ENCODE measurements at regions of chr11 and their contacts with region 1.

Region 1: GRCh38 chr11:18634140-18635032 is at the start of gene SPTY2D1:
- DNase-seq: peak; percentile 87
- ATAC-seq: peak; percentile 93
- H3K4me3 Mint-ChIP-seq: peak within 1 kb of the TSS; percentile 99
- H3K27ac Mint-ChIP-seq: peak within 1 kb of the TSS; percentile 97
- H3K4me1 Mint-ChIP-seq: peaks cover 25% of the 10 kb centered on the region
- H3K27me3 Mint-ChIP-seq: peaks cover 3% of the 10 kb centered on the region
- CTCF ChIP-seq: no peak
- total RNA-seq, gene SPTY2D1: 22.0 and 22.7 TPM in 2 replicates

Region 2: DNA sequence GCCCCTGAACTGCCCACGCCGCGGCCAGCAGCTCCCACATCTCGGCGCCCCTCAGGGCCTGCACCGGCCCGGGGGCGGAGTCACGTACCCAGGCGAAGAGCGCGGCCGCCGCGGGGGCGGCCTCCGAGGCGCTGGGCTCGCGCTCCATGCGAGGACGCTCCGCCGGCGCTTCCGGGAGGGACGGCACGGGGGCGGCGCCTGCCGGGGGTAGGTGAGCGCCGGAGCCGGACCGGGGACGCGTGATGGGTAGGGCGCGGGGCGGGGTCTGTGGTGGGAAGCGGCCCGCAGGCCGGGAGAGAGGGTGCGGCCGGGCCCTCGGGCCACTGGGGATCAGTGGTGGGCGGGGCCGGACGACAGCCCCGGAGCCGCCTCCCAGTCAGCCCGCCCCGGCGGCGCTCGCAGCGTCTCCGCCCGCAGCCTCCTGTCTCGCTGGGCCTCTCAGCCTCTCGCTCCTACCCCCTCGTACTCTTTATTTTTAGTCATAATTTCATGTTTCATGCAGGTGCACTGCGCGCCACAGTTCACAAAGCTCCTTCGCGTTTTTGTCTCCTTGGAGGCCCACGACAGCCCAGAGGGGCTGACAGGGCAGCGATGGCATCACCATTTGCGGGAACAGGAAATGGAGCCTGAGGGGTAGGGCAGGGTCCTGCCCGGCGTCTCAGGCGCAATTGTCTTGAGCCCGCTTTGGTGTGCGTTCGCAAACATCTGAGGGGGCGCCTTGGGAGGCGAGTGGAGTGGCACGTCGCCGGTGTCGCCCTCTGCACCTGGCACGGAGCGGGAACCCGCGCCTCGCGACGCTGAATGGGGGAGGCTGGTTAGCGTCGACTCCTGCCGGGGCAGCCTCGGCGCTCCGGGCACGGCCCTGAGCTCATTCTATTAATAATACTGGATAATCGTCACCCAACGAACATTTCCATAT is 621.3 kb before region 1 on chr11 and contains the start of gene SERGEF:
- CTCF ChIA-PET with region 1: no interaction called
- POLR2A ChIA-PET with region 1: no interaction called
- intact Hi-C with region 1: loop called (anchors 1 kb)
- DNase-seq: peak; percentile 96
- ATAC-seq: peak; percentile 94
- H3K4me3 Mint-ChIP-seq: peak within 1 kb of the TSS; percentile 100
- H3K27ac Mint-ChIP-seq: peak within 1 kb of the TSS; percentile 99
- H3K4me1 Mint-ChIP-seq: peaks cover 16% of the 10 kb centered on the region
- H3K27me3 Mint-ChIP-seq: no peaks in the 10 kb centered on the region
- CTCF ChIP-seq: no peak
- total RNA-seq, gene SERGEF: 38.4 and 47.4 TPM in 2 replicates

Region 3: GRCh38 chr11:18395735-18396504 is 238.5 kb before region 1 on chr11:
- CTCF ChIA-PET with region 1: no interaction called
- POLR2A ChIA-PET with region 1: interaction called, 12 read pairs
- intact Hi-C with region 1: loop called (anchors 2 kb)
- DNase-seq: peak; percentile 96
- ATAC-seq: peak; percentile 76
- H3K4me3 Mint-ChIP-seq: peak overlapping the region; percentile 96
- H3K27ac Mint-ChIP-seq: peak overlapping the region; percentile 91
- H3K4me1 Mint-ChIP-seq: peaks cover 18% of the 10 kb centered on the region
- H3K27me3 Mint-ChIP-seq: no peaks in the 10 kb centered on the region
- CTCF ChIP-seq: no peak

Region 4: GRCh38 chr11:18578975-18579598 is 55.3 kb before region 1 on chr11:
- CTCF ChIA-PET with region 1: no interaction called
- POLR2A ChIA-PET with region 1: no interaction called
- intact Hi-C with region 1: no loop called
- DNase-seq: no peak
- ATAC-seq: no peak
- H3K4me3 Mint-ChIP-seq: no peak overlapping the region
- H3K27ac Mint-ChIP-seq: no peak overlapping the region
- H3K4me1 Mint-ChIP-seq: no peaks in the 10 kb centered on the region
- H3K27me3 Mint-ChIP-seq: no peaks in the 10 kb centered on the region
- CTCF ChIP-seq: no peak

Region 5: DNA sequence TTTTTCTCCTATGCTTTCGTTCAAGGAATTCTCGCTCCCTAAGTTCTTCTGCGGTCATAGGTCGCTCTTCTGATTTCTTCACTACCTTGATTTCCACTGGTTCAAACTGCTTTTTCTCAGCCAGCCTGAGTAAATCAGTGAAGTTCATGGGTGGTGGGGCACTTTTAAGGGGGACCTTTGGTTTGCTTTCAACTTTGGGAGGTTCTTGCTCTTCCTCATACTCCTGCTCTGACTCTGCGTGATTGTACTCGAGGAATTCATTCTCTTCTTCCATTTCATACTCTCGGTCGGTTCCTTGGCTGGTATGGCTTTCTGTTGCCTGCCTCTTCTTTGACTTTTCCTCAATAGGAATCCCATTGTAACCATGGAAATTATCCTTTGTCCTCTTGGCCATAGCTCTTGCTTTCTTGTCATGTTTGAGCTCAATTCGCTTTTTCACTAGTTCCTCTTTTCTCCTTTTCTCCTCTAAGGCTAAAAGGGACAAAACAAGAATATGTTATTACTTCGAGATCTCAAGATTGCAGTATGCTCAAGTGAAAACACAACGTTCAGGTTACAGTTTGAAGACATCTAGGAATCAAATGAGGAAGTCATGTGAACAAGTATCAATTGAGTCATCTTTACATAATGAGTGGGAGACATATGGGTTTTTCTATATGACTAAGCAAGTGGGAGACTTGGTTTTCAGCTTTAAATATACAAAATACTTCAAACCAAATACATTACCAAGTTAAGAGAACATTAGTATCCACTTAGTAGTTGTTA is 18.6 kb before region 1 on chr11:
- CTCF ChIA-PET with region 1: no interaction called
- POLR2A ChIA-PET with region 1: interaction called, 17 read pairs
- intact Hi-C with region 1: loop called (anchors 1 kb)
- DNase-seq: no peak
- ATAC-seq: peak; percentile 82
- H3K4me3 Mint-ChIP-seq: no peak overlapping the region
- H3K27ac Mint-ChIP-seq: peak overlapping the region; percentile 56
- H3K4me1 Mint-ChIP-seq: peaks cover 36% of the 10 kb centered on the region
- H3K27me3 Mint-ChIP-seq: no peaks in the 10 kb centered on the region
- CTCF ChIP-seq: no peak

Region 6: DNA sequence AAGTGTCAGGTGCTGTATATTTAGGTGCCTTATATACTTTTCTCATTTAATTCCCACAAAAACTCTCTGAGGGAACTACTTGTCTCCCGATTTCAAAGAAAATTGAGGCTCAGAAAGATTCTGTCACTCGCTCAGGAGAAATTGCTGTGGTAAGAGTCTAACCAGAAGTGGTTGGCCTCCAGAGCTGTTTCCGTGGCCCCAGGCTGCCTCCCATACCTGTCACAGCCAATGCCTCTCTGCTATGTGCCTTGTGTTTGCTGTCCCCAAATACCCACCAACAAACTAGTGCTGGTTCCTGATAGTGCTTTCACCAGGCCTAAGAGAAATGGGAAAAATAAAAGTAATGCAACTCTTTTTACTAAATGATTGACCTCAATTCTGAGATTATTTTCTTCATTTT is 43.2 kb after region 1 on chr11:
- CTCF ChIA-PET with region 1: no interaction called
- POLR2A ChIA-PET with region 1: no interaction called
- intact Hi-C with region 1: no loop called
- DNase-seq: no peak
- ATAC-seq: no peak
- H3K4me3 Mint-ChIP-seq: no peak overlapping the region
- H3K27ac Mint-ChIP-seq: no peak overlapping the region
- H3K4me1 Mint-ChIP-seq: no peaks in the 10 kb centered on the region
- H3K27me3 Mint-ChIP-seq: peaks cover 5% of the 10 kb centered on the region
- CTCF ChIP-seq: no peak

Region 7: GRCh38 chr11:18706330-18707243 is 72.2 kb after region 1 on chr11:
- CTCF ChIA-PET with region 1: no interaction called
- POLR2A ChIA-PET with region 1: interaction called, 4 read pairs
- intact Hi-C with region 1: loop called (anchors 2 kb)
- DNase-seq: no peak
- ATAC-seq: peak; percentile 83
- H3K4me3 Mint-ChIP-seq: peak overlapping the region; percentile 88
- H3K27ac Mint-ChIP-seq: peak overlapping the region; percentile 77
- H3K4me1 Mint-ChIP-seq: peaks cover 21% of the 10 kb centered on the region
- H3K27me3 Mint-ChIP-seq: peaks cover 14% of the 10 kb centered on the region
- CTCF ChIP-seq: no peak

Region 8: GRCh38 chr11:20363500-20364411 is 1729.4 kb after region 1 on chr11 and contains the start of gene HTATIP2:
- CTCF ChIA-PET with region 1: no interaction called
- POLR2A ChIA-PET with region 1: no interaction called
- intact Hi-C with region 1: loop called (anchors 5 kb)
- DNase-seq: peak; percentile 78
- ATAC-seq: peak; percentile 87
- H3K4me3 Mint-ChIP-seq: peak within 1 kb of the TSS; percentile 88
- H3K27ac Mint-ChIP-seq: peak within 1 kb of the TSS; percentile 89
- H3K4me1 Mint-ChIP-seq: peaks cover 57% of the 10 kb centered on the region
- H3K27me3 Mint-ChIP-seq: no peaks in the 10 kb centered on the region
- CTCF ChIP-seq: no peak
- total RNA-seq, gene HTATIP2: 35.7 and 36.5 TPM in 2 replicates

Measured in activated B cell treated with CpG ODN at 0.5 μM for 24 hours (primary cell).